ENCODE measurements at regions of chr5 and their contacts with region 1.

Region 1: DNA sequence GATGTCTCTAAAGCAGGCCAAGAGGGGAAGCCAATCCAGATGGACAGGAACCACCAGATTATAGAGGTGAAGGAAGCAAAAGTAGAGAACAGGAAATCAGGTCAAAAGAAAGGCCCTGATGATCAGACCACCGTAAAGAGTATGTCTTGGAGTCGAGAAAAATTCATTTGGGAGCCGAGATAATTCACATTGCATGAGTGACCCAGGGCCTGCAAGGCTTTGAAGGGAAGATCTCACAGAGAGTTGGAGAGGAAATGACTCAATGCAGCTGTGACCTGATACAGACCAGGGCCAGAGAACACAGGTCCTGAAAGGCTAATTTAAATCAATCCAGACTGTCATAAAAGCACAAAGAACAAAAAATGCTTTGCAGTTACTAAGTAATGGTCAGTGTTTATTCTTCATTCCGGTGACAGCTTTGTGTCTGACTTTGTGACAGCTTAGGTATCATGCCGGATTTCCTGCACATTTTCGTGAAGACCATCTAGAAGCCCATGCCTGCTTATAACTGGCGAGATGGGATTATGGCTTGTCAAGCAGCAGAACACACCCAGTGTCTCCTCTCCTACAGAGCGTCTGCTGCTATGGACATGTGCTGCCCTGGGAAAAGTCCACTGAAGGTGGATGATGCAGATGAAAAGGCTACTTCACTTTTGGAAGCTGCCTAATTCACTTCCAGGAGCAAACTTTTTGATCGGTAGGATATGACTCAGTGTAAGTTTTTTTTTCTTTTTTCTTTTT is 5.8 kb upstream of the ACTBL2 start:
- DNase-seq: no peak
- H3K4me3 ChIP-seq: no peak overlapping the region
- CTCF ChIP-seq: no peak

Region 2: DNA sequence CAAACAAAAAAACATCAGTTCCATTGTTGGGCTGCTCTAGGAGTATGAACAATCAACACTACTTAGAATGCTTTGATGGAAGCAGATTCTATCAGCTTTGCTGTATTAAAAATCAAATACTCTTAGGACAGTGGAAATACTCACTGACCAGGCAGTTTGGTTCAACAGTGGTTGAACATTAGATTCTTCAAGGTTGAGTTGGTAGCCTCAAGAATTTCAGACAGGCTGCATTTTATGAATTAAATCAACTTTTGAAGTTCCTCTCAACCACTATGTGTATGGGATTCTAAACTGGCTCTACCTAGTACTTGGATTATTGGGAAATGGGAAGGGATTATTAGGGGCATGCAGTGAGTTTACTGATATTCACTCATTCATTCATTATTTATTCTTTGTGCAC is 40.7 kb before region 1 on chr5:
- in situ Hi-C with region 1: loop called (anchors 5 kb)
- DNase-seq: peak; percentile 46
- H3K4me3 ChIP-seq: no peak overlapping the region
- CTCF ChIP-seq: no peak

Region 3: GRCh38 chr5:57532513-57533497 is 44.4 kb after region 1 on chr5:
- in situ Hi-C with region 1: no loop called
- DNase-seq: no peak
- H3K4me3 ChIP-seq: no peak overlapping the region
- CTCF ChIP-seq: no peak

Region 4: DNA sequence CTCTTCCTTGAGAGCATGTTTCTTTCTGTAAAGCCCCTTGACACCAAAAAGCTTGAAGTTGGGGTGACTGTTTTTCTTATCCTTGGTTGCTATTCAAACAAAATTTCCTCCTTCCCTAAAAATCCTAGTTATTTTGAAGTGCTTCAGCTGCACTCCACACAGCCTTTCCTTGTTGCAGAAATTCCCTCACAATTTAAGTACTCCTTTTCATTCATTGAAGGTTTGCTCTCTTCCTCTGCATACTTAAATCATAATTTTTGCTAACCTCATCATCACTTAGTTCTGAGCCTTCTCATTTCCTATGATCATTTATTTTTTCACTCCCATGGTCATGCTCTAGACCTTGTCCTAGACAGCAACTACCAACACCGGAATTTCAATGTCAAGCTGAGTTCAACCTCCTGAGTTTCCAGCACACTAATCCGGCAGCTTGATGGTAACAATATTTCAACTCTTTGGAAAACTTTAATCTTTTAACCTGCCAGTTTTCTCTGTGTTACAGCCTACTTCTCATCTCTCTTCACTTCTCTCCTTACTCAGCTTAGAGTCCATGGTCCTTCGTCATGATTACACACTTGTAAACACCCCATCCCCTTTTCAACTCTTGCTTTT is 73.0 kb after region 1 on chr5:
- in situ Hi-C with region 1: no loop called
- DNase-seq: no peak
- H3K4me3 ChIP-seq: no peak overlapping the region
- CTCF ChIP-seq: no peak